ENCODE measurements at regions of chr5 and their contacts with region 1.

Region 1: DNA sequence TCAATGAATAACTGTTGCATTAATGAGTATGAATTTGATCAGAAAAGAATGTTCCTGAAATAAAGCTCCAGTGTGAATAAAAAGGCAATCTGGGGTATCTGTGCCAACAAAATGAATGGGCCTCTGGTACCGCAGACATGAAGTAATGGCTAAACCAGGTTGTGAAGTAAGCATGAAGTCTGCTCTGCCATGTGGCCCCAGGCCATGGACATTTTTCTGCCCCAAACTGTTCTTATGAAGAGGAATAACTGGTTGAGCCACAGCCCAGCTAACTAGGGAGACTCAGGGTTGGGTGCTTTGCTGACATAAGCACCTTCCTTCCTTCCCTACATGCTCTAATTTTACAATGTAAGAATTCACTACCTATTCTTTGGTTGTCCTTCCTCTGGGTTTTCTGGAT is 147.4 kb upstream of the LRRTM2 start:
- DNase-seq: no peak
- ATAC-seq: no peak
- H3K4me3 ChIP-seq: no peak overlapping the region
- H3K27ac ChIP-seq: no peak overlapping the region
- H3K4me1 ChIP-seq: peaks cover 0 to 10% (median under 1%) of the 10 kb centered on the region in 12 donors
- H3K27me3 ChIP-seq: no peaks in the 10 kb centered on the region
- CTCF ChIP-seq: no peak
- POLR2A ChIP-seq: no peak

Region 2: DNA sequence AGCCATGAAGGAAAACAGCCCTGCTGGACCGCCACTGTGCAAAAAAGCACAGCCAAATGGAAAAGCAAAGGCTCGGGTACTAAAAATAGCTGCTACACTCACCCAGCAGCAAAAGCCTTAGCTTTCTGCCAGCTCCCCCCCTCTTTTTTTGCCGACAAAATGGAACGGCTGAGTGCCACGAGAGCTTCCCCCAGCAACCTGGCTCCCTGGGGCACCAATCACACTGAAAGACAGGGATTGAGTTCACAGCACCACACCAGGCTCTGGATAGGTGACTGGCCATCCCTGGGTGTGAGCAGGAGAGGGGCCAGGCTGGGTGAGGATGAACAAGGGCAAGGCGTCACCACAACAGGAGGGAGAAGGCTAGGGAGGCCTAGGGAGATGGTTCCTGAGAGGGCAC is 108.9 kb after region 1 on chr5:
- intact Hi-C with region 1: loop called in 1 of 10 experiments (anchors 5 kb)
- DNase-seq: peak in 4 of 5 donors; percentile 51 to 75 (median 70)
- ATAC-seq: peak; percentile 70 to 78 (median 76)
- H3K4me3 ChIP-seq: peak overlapping the region in 8 of 12 donors; percentile 4 to 36 (median 26)
- H3K27ac ChIP-seq: peak overlapping the region; percentile 68 to 92 (median 88)
- H3K4me1 ChIP-seq: peaks cover 0 to 57% (median 38%) of the 10 kb centered on the region in 12 donors
- H3K27me3 ChIP-seq: no peaks in the 10 kb centered on the region
- CTCF ChIP-seq: no peak
- POLR2A ChIP-seq: no peak

Measured in heart left ventricle (tissue), 16 donors.